ENCODE measurements at regions of chr16 and their contacts with region 1.

Region 1: DNA sequence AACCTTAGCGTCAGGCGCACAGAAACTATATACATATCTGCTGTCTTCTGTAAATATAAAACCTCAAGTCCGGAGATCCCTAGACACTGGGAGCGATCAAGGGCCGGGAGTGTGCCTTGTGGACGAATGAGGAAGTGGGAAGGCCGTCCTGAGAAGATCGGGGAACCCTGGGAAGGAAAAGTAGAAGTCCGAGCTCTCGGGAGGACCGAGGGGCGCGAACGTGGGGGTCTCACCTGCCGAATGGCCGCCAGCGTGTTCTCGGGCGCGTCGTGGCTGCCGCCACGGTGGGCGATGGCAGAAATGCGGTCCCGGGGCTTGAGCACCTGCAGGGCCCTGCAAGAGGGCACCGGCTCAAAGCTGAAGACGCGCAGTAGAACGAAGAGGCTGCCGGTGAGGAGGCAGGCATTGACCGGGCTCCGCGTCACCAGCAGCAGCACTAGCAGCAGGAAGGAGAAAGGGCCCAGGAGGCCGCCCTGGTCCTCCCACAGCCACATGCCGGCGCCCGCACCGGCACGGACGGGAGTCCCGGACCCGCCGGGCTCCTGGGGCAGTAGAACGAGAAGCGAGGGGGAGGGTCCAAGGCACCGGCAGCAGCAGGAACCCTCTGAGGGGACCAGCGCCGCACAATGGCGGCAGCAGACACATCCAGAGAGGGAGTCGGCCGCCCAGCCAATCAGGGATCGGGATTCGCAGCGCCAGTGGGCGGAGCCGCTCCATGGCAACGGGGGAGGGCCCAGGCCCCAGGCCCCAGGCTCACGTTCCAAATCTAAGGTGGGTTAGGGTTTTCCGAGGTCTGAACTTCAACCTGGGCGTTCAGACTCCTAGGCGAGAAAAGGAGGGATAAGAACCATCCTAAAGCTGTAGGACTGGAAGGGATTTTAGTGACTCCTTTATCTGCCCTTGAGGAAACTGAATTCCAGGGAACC is at the start of gene GDE1:
- DNase-seq: peak; percentile 85
- H3K4me3 ChIP-seq: peak within 1 kb of the TSS; percentile 80 to 83 (median 83)
- H3K27ac ChIP-seq: peak within 1 kb of the TSS; percentile 65
- H3K4me1 ChIP-seq: peaks cover 40% of the 10 kb centered on the region
- H3K27me3 ChIP-seq: no peaks in the 10 kb centered on the region
- CTCF ChIP-seq: peak in 1 of 2 donors; percentile 52
- total RNA-seq, gene GDE1: 48.4 to 61.2 TPM

Region 2: DNA sequence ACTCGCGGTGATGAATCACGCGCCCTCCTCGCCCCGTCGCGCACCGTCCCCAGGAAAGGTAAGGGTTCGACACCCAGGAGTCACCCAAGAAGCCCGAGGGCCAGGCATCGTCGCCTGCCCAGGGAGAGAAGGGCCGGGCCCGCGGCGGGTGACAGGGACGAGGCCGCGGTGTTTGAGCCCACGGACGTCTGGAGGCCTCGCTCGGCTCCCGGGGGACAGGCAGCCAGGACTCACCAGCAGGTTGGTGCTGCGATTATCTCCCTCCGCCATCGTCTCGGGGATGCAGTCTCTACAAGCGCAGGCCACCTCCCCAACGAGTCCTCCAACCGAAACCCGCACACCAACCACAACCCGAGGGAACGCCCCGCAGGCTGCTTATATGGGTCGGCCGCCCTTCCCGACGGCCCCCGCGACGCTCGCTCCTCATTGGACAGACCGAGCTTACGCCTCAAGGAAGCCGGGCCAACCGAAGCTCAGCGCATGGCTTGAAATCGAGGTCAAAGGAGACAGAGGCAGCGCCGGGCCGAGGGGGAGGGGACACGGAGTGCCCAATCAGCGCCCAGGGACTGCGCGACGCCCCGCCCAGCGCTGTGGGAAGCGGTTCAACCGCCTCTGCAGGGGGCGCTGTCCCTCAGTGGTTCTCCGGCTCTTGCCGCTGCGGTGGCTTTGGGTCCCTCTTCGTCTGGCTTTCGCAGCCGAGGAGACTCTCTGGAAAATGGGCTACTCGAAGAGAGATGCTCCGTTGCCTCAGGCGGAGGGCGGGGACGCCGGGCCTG is 720.3 kb before region 1 on chr16 and contains the start of gene ARL6IP1:
- CTCF ChIA-PET with region 1: no interaction called
- dilution Hi-C with region 1: no loop called
- in situ Hi-C with region 1: no loop called
- intact Hi-C with region 1: loop called (anchors 10 kb)
- DNase-seq: peak; percentile 99
- H3K4me3 ChIP-seq: peak within 1 kb of the TSS; percentile 83 to 97 (median 95)
- H3K27ac ChIP-seq: peak within 1 kb of the TSS; percentile 85
- H3K4me1 ChIP-seq: peaks cover 42% of the 10 kb centered on the region
- H3K27me3 ChIP-seq: no peaks in the 10 kb centered on the region
- CTCF ChIP-seq: peak; percentile 62 to 94
- total RNA-seq, gene ARL6IP1: 88.7 to 236 TPM

Region 3: DNA sequence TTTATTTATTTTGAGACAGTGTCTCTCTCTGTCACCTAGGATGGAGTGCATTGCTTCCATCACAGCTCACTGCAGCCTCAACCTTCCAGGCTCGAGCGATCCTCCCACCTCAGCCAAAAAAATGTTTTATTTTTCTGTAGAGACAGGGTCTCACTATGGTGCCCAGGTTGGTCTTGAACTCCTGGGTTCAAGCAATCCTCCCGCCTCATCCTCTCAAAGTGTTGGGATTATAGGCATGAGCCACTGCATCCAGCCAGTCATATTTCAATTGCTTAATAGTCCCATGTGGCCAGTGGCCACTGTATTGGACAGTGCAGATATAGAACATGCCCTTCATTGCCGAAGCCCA is 522.7 kb before region 1 on chr16:
- CTCF ChIA-PET with region 1: no interaction called
- dilution Hi-C with region 1: no loop called
- in situ Hi-C with region 1: loop called in 1 of 2 experiments (anchors 25 kb)
- intact Hi-C with region 1: loop called (anchors 5 kb)
- DNase-seq: no peak
- H3K4me3 ChIP-seq: no peak overlapping the region
- H3K27ac ChIP-seq: peak overlapping the region; percentile 91
- H3K4me1 ChIP-seq: peaks cover 38% of the 10 kb centered on the region
- H3K27me3 ChIP-seq: no peaks in the 10 kb centered on the region
- CTCF ChIP-seq: no peak

Region 4: GRCh38 chr16:19130852-19131810 is 390.6 kb before region 1 on chr16:
- CTCF ChIA-PET with region 1: no interaction called
- dilution Hi-C with region 1: loop called (anchors 25 kb)
- in situ Hi-C with region 1: no loop called
- intact Hi-C with region 1: no loop called
- DNase-seq: no peak
- H3K4me3 ChIP-seq: no peak overlapping the region
- H3K27ac ChIP-seq: no peak overlapping the region
- H3K4me1 ChIP-seq: peaks cover 16% of the 10 kb centered on the region
- H3K27me3 ChIP-seq: no peaks in the 10 kb centered on the region
- CTCF ChIP-seq: no peak

Region 5: GRCh38 chr16:19532601-19533000 is 10.9 kb after region 1 on chr16:
- CTCF ChIA-PET with region 1: no interaction called
- dilution Hi-C with region 1: no loop called
- in situ Hi-C with region 1: no loop called
- intact Hi-C with region 1: no loop called
- DNase-seq: no peak
- H3K4me3 ChIP-seq: no peak overlapping the region
- H3K27ac ChIP-seq: no peak overlapping the region
- H3K4me1 ChIP-seq: no peaks in the 10 kb centered on the region
- H3K27me3 ChIP-seq: no peaks in the 10 kb centered on the region
- CTCF ChIP-seq: no peak

Region 6: GRCh38 chr16:19555162-19555937 is 33.6 kb after region 1 on chr16 and contains the start of gene VPS35L:
- CTCF ChIA-PET with region 1: interaction called, 5 read pairs
- dilution Hi-C with region 1: no loop called
- in situ Hi-C with region 1: no loop called
- intact Hi-C with region 1: loop called (anchors 1 kb)
- DNase-seq: peak; percentile 98
- H3K4me3 ChIP-seq: peak within 1 kb of the TSS; percentile 53 to 92 (median 70)
- H3K27ac ChIP-seq: peak within 1 kb of the TSS; percentile 65
- H3K4me1 ChIP-seq: no peaks in the 10 kb centered on the region
- H3K27me3 ChIP-seq: no peaks in the 10 kb centered on the region
- CTCF ChIP-seq: peak; percentile 74 to 78
- total RNA-seq, gene VPS35L: 35.2 to 63.1 TPM